Right cardiac atrium (tissue), 5 donors: ENCODE measurements at regions of chr1 and their contacts with region 1.

Region 1: DNA sequence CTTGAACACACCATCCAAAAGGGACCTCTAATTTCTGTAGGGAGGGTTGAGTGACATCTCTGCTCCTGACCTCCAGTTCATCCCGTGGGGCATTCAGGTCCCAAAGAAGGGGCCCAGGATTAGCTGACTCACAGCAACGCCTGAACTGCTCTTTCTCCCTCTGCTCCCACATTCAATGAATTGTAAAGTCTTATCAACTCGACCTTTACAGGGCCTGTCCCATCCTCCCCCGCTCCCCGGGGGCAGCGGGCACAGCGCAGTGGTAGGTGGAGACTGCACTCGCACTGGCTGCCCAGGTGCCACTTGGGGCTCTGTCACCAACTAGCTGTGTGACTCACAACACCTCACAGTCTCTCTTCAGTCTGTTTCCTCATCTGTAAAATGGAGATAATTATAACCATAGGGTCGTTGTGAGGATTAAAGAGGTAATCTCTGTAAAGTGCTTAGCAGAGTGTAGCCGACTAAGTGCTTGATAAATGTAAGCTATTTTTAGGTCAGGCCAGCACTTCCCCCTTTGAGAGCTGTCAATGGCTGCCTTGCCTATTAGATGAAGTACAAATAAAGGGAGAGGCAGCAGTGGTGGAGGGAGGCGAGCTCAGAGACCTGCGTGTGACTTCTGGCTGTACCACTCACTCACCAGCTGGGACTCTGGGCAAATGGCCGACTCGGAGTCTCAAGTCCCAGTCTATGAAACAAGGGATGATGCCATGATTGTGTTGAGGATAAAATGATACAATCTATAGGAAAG is 637 bp upstream of the MYBPHL start:
- DNase-seq: peak; percentile 68 to 89 (median 86)
- ATAC-seq: peak; percentile 86 to 89
- H3K4me3 ChIP-seq: no peak overlapping the region
- H3K27ac ChIP-seq: peak overlapping the region; percentile 90
- H3K4me1 ChIP-seq: peaks cover 10% of the 10 kb centered on the region
- H3K27me3 ChIP-seq: no peaks in the 10 kb centered on the region

Region 2: DNA sequence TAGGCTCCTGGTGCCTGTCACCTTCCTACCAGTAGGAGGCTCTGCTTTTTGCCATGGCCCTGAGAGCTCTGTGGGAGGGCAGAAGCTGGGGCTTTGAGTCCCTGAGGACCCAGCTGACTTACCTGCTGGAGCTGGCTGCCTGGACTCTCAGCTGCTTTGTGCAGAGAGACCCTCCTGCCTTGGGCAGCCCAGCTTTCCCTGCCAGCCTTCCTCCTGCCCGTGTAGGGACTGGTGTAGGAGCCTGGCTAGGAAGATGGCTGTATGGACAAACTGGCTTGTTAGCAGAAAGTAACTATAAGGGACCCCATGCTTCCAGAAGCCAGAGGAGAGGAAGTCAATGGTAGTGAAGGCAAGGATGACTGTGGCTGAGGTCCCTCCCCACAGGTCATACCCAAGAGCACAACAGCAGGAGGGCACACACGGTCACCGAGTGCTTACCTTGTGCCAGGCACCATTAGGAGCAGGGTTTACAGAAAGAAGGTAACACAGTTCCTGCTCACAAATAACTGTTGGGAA is 67.8 kb before region 1 on chr1:
- intact Hi-C with region 1: no loop called
- DNase-seq: no peak
- ATAC-seq: peak; percentile 26 to 44
- H3K4me3 ChIP-seq: no peak overlapping the region
- H3K27ac ChIP-seq: no peak overlapping the region
- H3K4me1 ChIP-seq: peaks cover 5% of the 10 kb centered on the region
- H3K27me3 ChIP-seq: no peaks in the 10 kb centered on the region

Region 3: GRCh38 chr1:109282952-109283747 is 24.3 kb before region 1 on chr1 and contains the start of gene PSRC1:
- intact Hi-C with region 1: loop called in 1 of 4 experiments (anchors 2 kb)
- DNase-seq: peak; percentile 97 to 98 (median 98)
- ATAC-seq: peak; percentile 99
- H3K4me3 ChIP-seq: peak within 1 kb of the TSS; percentile 44
- H3K27ac ChIP-seq: peak within 1 kb of the TSS; percentile 65
- H3K4me1 ChIP-seq: peaks cover 8% of the 10 kb centered on the region
- H3K27me3 ChIP-seq: no peaks in the 10 kb centered on the region
- total RNA-seq, gene PSRC1: 1.6 to 4.6 (median 2.3) TPM